ENCODE measurements at regions of chr1 and their contacts with region 1.

Region 1: DNA sequence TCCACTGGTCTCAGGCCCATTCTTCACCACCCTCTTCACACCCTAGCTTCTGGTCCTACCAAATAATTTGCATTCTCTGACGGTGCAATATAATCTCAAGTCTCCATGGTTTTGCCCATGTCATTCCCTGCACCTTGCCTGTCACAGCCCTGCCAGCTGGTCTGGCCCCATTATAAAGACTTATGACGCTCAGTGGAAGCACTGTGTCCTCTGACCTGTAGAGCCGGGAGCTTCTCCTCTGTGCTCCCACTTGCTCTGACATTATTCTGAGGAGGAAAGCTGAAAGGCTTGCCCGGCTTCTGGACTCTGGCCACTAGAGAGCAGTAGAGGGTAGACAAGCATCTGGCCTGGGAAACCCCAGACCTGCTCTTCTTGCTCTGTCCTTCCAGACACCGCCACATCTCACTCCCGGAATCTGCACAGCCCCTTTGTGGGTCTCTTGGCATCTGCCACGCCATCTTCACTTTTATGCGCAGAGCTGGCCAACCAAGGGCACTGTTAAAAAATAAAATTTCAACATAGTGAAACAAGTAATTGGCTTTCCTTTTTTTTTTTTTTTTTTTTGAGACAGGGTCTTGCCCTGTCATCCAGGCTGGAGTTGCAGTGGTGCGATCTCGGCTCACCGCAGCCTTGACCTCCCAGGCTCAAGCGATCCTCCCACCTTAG is 44.4 kb downstream of the NENF start:
- DNase-seq: peak; percentile 75
- H3K4me3 ChIP-seq: no peak overlapping the region
- H3K27ac ChIP-seq: no peak overlapping the region
- H3K4me1 ChIP-seq: no peaks in the 10 kb centered on the region
- H3K27me3 ChIP-seq: no peaks in the 10 kb centered on the region
- CTCF ChIP-seq: peak; percentile 91 to 93

Region 2: DNA sequence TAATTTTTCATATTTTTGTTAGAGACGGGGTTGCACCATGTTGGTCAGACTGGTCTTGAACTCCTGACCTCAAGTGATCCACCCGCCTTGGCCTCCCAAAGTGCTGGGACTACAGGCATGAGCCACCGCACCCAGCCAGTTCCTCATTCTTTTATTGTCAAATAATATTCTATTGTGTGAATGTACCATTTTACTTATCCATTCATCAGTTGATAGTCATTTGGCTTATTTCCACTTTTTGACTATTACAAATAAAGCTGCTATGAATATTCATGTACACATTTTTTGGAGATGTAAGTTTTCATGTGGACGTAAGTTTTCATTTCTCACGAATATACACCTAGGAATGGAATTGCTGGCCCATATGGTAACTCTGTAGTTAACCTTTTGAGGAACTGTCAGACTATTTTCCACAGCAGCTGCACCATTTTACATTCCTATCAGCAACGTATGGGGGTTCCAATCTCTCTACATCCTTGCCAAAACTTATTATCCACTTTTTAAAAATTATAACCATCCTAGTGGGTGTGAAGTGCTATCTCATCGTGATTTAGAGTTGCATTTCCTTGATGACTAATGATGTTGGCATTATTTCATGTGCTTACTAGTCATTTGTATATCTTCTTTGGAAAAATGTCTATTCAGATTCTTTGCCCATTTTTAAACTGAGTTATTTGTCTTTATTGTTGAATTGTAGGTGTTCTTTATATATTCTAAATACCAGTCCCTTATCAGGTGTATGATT is 75.1 kb before region 1 on chr1:
- CTCF ChIA-PET with region 1: no interaction called
- dilution Hi-C with region 1: no loop called
- in situ Hi-C with region 1: no loop called
- intact Hi-C with region 1: no loop called
- DNase-seq: peak; percentile 56
- H3K4me3 ChIP-seq: no peak overlapping the region
- H3K27ac ChIP-seq: peak overlapping the region; percentile 70
- H3K4me1 ChIP-seq: peaks cover 16% of the 10 kb centered on the region
- H3K27me3 ChIP-seq: no peaks in the 10 kb centered on the region
- CTCF ChIP-seq: no peak

Region 3: DNA sequence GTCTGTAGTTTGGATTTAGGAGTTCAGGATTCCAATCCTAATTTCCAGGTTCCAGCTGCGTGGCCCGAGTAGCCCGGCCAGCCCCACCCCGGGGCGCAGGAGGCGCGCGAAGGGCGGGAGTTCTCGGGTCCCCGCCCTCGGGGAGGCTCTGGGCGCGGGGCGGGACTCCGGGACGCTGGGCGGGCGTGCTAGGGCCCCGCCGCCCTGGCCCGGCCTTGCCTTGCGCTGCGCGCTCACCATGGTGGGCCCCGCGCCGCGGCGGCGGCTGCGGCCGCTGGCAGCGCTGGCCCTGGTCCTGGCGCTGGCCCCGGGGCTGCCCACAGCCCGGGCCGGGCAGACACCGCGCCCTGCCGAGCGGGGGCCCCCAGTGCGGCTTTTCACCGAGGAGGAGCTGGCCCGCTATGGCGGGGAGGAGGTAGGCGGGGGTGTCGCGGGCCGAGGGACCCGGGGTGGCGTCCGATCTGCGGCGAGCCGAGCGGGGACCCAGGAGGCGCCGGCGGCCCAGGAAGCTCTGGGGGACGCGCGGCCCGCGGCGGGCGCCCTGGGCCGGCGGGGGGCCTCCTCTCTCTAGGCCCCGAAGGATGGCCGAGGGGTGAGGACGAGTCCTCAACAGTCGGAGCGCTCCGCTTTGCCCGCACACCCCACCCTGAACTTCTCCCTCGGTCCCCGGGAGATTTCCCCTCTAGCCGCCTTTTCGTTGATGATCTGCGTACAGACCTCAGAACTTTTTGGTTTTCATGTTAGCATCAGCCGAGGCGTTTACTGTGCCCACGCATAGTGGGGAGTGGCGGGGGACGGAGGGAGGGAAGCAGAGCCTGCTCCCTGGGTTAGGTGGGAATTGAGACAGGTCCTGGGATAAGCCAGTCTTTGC is 44.2 kb before region 1 on chr1 and contains the start of gene NENF:
- CTCF ChIA-PET with region 1: no interaction called
- dilution Hi-C with region 1: no loop called
- in situ Hi-C with region 1: no loop called
- intact Hi-C with region 1: no loop called
- DNase-seq: peak; percentile 82
- H3K4me3 ChIP-seq: peak within 1 kb of the TSS; percentile 48 to 68 (median 56)
- H3K27ac ChIP-seq: peak within 1 kb of the TSS; percentile 71
- H3K4me1 ChIP-seq: peaks cover 9% of the 10 kb centered on the region
- H3K27me3 ChIP-seq: no peaks in the 10 kb centered on the region
- CTCF ChIP-seq: no peak
- total RNA-seq, gene NENF: 35.5 to 46.2 TPM

Region 4: DNA sequence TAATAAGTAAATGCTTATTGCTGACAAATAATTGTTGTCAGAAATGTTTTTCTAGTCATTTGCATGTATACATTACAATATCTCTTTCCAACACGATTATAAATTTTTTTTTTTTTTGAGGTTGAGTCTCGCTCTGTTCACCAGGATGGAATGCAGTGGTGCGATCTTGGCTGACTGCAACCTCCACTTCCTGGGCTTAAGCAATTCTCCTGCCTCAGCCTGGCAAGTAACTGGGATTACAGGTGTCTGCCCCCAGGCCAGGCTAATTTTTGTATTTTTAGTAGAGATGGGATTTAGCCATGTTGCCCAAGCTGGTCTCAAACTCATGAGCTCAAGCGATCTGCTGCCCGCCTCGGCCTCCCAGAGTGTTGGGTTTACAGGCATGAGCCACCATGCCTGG is 59.4 kb after region 1 on chr1:
- CTCF ChIA-PET with region 1: no interaction called
- dilution Hi-C with region 1: no loop called
- in situ Hi-C with region 1: no loop called
- intact Hi-C with region 1: loop called (anchors 2 kb)
- DNase-seq: no peak
- H3K4me3 ChIP-seq: no peak overlapping the region
- H3K27ac ChIP-seq: peak overlapping the region; percentile 22
- H3K4me1 ChIP-seq: peaks cover 3% of the 10 kb centered on the region
- H3K27me3 ChIP-seq: no peaks in the 10 kb centered on the region
- CTCF ChIP-seq: no peak

Region 5: GRCh38 chr1:212595787-212596714 is 118.9 kb after region 1 on chr1:
- CTCF ChIA-PET with region 1: interaction called, 3 read pairs
- dilution Hi-C with region 1: no loop called
- in situ Hi-C with region 1: loop called in 1 of 2 experiments (anchors 10 kb)
- intact Hi-C with region 1: loop called (anchors 1 kb)
- DNase-seq: peak; percentile 98
- H3K4me3 ChIP-seq: peak overlapping the region; percentile 2 to 7 (median 5)
- H3K27ac ChIP-seq: peak overlapping the region; percentile 95
- H3K4me1 ChIP-seq: peaks cover 27% of the 10 kb centered on the region
- H3K27me3 ChIP-seq: no peaks in the 10 kb centered on the region
- CTCF ChIP-seq: peak; percentile 75 to 81

Region 6: DNA sequence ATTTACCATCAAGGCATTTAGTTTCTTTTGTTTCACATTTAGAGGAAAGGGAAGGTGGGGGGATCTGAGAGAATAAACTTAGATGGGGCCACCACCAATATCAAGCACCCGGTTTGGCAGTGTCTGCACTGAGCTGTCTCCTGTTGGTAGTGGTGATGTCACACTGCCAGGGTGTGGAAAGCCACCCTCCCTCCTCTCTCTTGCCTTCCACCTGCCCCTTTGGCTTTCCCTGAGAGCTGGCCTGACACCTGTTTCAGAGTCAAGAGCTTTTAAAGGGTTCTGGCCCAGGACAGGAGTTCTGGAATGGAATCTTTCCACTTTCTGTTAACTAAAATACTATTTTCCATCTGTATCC is 144.8 kb after region 1 on chr1:
- CTCF ChIA-PET with region 1: no interaction called
- dilution Hi-C with region 1: no loop called
- in situ Hi-C with region 1: loop called in 1 of 2 experiments (anchors 10 kb)
- intact Hi-C with region 1: no loop called
- DNase-seq: peak; percentile 49
- H3K4me3 ChIP-seq: no peak overlapping the region
- H3K27ac ChIP-seq: no peak overlapping the region
- H3K4me1 ChIP-seq: no peaks in the 10 kb centered on the region
- H3K27me3 ChIP-seq: no peaks in the 10 kb centered on the region
- CTCF ChIP-seq: no peak

Region 7: DNA sequence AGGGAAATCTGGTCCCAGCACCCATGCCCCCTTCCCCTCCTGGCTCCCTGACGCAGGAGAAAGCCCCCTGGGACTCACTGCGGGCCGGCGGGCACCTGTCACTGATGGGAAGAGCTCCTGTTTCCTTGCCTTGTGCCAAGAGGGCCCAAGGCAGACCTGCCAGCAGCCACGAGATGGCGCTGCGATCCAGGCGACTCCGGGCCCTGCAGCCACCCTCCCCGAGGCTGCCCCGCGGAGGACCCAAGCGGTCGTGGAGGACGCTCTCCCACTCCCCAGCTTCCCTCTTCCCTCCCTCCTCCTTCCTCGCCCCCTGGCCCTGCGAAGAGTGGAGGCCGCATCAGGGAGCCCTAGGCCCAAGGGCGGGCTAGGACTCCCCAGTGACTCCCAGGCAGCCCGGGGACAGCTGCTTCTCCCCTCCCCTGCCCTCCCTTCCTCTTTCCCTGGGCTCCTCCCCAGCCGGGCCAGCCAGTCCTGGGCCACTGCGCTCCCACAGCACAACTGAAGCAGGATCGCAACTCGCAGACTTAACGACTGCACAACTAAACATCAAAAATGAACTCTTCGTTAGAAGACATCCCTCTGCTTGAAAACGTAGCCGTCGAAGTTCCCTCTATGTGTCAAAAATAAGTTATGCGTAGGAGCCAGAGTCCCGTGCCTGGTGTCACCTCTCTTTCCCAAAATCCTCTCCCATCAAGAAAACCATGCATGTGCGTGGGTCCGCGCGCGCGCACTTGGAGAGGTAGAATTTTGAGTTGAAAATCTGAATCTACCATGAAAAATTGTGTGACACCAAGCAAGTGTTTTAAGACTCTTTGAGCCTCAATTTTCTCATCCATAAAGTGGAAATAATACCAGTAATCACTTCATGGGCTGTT is 188.3 kb after region 1 on chr1:
- CTCF ChIA-PET with region 1: no interaction called
- dilution Hi-C with region 1: no loop called
- in situ Hi-C with region 1: no loop called
- intact Hi-C with region 1: loop called (anchors 1 kb)
- DNase-seq: peak; percentile 56
- H3K4me3 ChIP-seq: no peak overlapping the region
- H3K27ac ChIP-seq: no peak overlapping the region
- H3K4me1 ChIP-seq: peaks cover 13% of the 10 kb centered on the region
- H3K27me3 ChIP-seq: no peaks in the 10 kb centered on the region
- CTCF ChIP-seq: peak; percentile 68 to 88

Region 8: DNA sequence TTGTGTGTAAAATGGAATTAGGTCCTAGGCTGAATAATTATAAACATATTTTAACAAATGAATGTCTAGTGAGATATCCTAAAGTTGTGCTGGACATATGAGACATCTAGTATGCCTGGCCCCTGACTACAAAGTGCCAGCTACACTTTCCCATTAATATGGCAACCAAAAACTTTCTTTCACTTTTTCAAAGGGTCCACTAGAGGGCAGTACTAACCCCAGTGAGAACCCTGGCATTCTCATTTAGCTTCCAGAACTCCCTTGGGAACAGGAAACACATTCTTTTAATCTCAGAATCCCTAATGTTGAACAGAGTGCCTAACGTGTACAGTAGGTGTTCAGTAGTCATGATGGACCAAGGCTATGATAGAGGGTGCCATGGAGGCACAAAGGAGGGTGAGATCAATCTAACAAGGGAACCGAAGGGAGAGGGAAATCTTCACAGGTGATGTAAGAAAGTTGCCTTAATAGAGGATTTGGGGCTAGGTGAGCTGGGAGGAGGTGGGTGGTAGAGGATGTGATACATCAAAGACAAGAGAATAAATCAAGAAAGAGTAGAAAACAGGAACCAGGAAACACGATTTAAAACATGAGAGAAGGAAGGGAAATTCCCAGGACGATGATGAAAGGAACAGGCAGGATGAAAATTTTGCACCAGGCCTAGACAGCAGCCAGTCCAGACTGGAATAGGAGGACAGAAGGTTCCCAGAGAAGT is 272.8 kb after region 1 on chr1:
- CTCF ChIA-PET with region 1: interaction called, 3 read pairs
- dilution Hi-C with region 1: no loop called
- in situ Hi-C with region 1: loop called in 1 of 2 experiments (anchors 25 kb)
- intact Hi-C with region 1: loop called (anchors 1 kb)
- DNase-seq: peak; percentile 59
- H3K4me3 ChIP-seq: no peak overlapping the region
- H3K27ac ChIP-seq: no peak overlapping the region
- H3K4me1 ChIP-seq: peaks cover 3% of the 10 kb centered on the region
- H3K27me3 ChIP-seq: no peaks in the 10 kb centered on the region
- CTCF ChIP-seq: peak; percentile 74 to 80

Region 9: GRCh38 chr1:212981571-212982328 is 504.6 kb after region 1 on chr1:
- CTCF ChIA-PET with region 1: no interaction called
- dilution Hi-C with region 1: loop called (anchors 25 kb)
- in situ Hi-C with region 1: loop called (anchors 25 kb)
- intact Hi-C with region 1: no loop called
- DNase-seq: no peak
- H3K4me3 ChIP-seq: no peak overlapping the region
- H3K27ac ChIP-seq: no peak overlapping the region
- H3K4me1 ChIP-seq: no peaks in the 10 kb centered on the region
- H3K27me3 ChIP-seq: no peaks in the 10 kb centered on the region
- CTCF ChIP-seq: no peak

Region 10: GRCh38 chr1:213335084-213335483 is 857.9 kb after region 1 on chr1:
- CTCF ChIA-PET with region 1: no interaction called
- dilution Hi-C with region 1: no loop called
- in situ Hi-C with region 1: no loop called
- intact Hi-C with region 1: no loop called
- DNase-seq: no peak
- H3K4me3 ChIP-seq: no peak overlapping the region
- H3K27ac ChIP-seq: no peak overlapping the region
- H3K4me1 ChIP-seq: no peaks in the 10 kb centered on the region
- H3K27me3 ChIP-seq: no peaks in the 10 kb centered on the region
- CTCF ChIP-seq: no peak